Sigmoid colon (tissue), 7 donors: ENCODE measurements at regions of chr18 and their contacts with region 1.

Region 1: DNA sequence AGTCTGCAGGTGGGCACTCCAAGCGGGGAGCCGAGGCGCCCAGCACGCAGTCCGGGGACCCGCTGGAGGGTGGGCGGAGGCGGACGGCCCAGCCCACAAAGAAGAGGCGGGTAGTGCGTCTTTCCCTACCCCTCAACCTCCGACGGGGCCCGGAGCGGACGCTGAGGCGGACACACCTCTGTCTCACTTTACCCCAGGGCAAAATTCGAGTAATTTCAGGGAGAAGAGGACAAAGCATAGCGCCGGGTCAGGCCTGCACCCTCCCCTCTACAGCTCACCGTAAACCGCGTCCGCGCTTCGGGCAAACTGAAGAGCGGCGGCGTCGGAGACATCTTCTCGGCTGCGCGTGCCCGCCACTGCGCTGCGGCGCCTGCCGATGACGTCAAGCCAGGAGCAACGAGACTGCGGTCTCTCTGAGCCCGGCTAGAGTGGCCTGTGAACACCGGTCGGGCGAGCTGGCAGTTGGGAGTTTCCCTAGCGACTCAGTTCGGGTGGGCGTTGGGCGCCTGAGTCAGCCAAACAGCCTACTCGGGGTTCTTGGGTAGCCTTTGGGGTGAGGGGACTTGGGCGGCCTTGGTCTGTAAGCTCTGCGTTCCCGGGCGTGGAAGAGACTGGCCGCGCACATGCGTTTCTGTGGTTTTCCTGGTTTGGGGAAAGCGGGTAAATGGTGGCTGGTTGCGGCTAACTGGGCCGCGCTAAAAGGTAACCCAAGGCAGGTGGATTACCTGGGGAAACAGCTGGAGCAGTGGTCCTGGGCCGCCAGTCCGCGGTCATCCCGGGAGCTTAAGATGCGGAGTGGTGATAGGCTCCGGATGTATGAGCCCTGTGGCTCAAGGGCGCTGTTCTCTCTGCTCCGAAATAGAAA is at the start of gene THOC1:
- DNase-seq: peak; percentile 96
- H3K4me3 ChIP-seq: peak within 1 kb of the TSS; percentile 73 to 91 (median 75)
- H3K27ac ChIP-seq: peak within 1 kb of the TSS; percentile 82 to 87 (median 85)
- H3K4me1 ChIP-seq: peaks cover 0 to 26% (median 16%) of the 10 kb centered on the region in 4 donors
- H3K27me3 ChIP-seq: no peaks in the 10 kb centered on the region
- CTCF ChIP-seq: no peak
- EP300 ChIP-seq: peak in 1 of 4 donors; percentile 9
- POLR2A ChIP-seq: peak; percentile 71 to 84
- total RNA-seq, gene THOC1: 40.8 to 71.2 (median 46.9) TPM

Region 2: GRCh38 chr18:812376-813171 is 544.7 kb after region 1 on chr18:
- intact Hi-C with region 1: loop called (anchors 10 kb)
- DNase-seq: peak; percentile 93
- H3K4me3 ChIP-seq: peak overlapping the region; percentile 82 to 94 (median 88)
- H3K27ac ChIP-seq: peak overlapping the region; percentile 95 to 97 (median 97)
- H3K4me1 ChIP-seq: peaks cover 0 to 41% (median 25%) of the 10 kb centered on the region in 4 donors
- H3K27me3 ChIP-seq: no peaks in the 10 kb centered on the region
- CTCF ChIP-seq: no peak
- EP300 ChIP-seq: no peak
- POLR2A ChIP-seq: peak; percentile 6 to 40